WTC11 (cell line): ENCODE measurements at regions of chr7 and their contacts with region 1.

Region 1: DNA sequence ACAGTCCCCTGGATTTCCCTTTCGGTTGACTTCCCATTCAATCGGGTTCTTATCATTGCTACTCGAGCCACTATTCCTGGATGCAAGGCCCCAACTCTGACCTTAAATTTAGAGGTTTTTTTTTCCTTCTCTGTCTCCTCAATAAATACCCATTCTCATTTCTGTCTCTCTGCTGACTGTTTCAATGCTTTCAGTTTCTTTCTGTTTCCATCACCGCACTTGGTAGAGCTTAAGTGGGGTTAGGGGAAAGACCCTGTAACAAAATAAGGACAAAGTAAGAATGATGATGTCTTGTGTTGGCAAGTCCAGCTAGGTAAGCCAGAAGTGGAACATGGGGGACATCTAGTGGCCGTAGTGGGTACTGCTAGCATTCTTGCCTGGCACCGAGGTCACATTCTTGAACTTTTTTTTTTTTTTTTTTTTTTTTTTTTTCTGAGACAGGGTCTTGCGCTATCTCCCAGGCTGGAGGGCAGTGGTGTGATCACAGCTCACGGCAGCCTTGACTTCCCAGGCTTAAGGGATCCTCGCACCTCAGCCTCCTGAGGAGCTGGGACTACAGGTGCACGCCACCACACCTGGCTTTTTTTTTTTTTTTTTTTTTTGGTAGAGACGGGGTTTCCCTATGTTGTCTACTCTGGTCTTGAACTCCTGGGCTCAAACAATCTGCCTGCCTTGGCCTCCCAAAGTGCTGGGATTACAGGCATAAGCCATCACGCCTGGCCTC is 40.3 kb downstream of the ZC3HC1 start:
- DNase-seq: peak; percentile 93
- ATAC-seq: peak; percentile 78
- H3K4me3 Mint-ChIP-seq: no peak overlapping the region
- H3K27ac Mint-ChIP-seq: 0 out of 2 replicates have a peak overlapping the region, but pooled peaks have one; percentile 44
- H3K4me1 Mint-ChIP-seq: peaks cover 3% of the 10 kb centered on the region
- H3K27me3 Mint-ChIP-seq: no peaks in the 10 kb centered on the region
- CTCF ChIP-seq: peak; percentile 95

Region 2: DNA sequence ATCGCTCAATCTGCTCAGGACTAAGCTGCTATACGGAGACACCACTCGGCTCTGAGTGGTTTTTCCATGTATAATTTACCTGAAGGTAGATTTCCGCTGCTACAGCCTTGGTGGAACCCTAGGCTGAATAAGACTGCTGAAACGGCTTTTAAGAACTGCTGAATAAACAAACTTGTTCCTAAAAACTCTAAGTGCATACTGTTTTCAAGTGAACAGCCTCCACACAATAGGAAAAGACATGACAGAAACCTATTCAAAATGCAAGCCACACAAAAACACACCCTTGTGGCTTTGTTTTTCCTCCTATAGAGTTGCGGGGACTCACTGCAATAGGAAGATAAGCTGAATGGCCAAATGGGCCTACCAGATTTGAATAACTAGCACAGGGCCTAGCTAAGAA is 175.3 kb before region 1 on chr7:
- CTCF ChIA-PET with region 1: interaction called, 54 read pairs
- POLR2A ChIA-PET with region 1: interaction called, 8 read pairs
- DNase-seq: no peak
- ATAC-seq: no peak
- H3K4me3 Mint-ChIP-seq: no peak overlapping the region
- H3K27ac Mint-ChIP-seq: peak overlapping the region; percentile 80
- H3K4me1 Mint-ChIP-seq: peaks cover 80% of the 10 kb centered on the region
- H3K27me3 Mint-ChIP-seq: no peaks in the 10 kb centered on the region; the same call in 1 of the 2 replicates
- CTCF ChIP-seq: no peak

Region 3: DNA sequence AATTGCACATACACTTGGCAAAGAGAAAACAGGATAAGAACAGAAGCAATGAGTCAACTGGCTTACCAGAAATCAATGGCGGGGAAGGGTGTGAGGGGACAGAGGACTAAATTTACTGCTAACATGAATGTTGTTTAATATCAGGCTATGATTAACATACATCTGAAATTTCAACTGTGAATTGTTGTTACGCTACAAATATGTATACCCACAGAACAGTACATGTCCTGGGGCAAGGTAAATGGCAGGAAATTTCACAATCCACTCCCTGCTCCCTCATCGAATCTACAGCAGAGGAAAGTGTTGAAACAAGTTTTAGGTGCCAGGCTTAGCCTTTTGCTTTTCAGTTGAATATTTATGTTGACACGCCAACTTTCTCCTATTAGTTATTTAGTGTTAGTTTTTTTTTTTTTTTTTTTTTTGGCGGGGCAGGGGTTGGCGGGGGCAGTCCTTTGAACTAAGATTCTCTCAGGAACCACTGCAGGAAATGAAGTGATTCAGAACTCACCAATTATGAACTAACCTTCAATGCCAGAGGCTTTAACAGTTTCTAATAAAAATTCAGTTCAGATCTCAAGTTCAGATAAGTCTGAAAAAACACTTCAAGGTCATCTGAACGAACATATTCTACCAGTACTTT is 157.1 kb before region 1 on chr7:
- CTCF ChIA-PET with region 1: no interaction called
- POLR2A ChIA-PET with region 1: no interaction called
- DNase-seq: no peak
- ATAC-seq: no peak
- H3K4me3 Mint-ChIP-seq: no peak overlapping the region
- H3K27ac Mint-ChIP-seq: no peak overlapping the region; the same call in 1 of the 2 replicates
- H3K4me1 Mint-ChIP-seq: peaks cover 74% of the 10 kb centered on the region
- H3K27me3 Mint-ChIP-seq: no peaks in the 10 kb centered on the region
- CTCF ChIP-seq: no peak

Region 4: DNA sequence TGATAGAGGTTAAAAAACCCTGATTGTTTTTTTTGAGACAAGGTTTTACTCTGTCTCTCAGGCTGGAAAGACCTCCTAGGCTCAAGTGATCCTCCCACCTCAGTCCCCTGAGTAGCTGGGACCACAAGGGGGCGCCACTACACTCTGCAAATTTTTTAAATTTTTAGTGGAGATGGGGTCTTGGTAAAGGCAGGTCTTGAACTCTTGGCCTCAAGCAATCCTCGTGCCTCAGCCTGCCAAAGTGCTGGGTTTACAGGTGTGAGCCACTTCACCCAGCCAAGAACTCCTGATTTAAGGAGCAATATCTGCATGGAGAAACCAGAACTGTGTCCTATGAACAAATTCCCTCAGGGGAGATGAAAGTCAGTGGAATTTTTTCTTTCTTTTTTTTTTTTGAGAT is 52.2 kb after region 1 on chr7:
- CTCF ChIA-PET with region 1: no interaction called
- POLR2A ChIA-PET with region 1: no interaction called
- DNase-seq: peak; percentile 92
- ATAC-seq: peak; percentile 86
- H3K4me3 Mint-ChIP-seq: no peak overlapping the region
- H3K27ac Mint-ChIP-seq: no peak overlapping the region
- H3K4me1 Mint-ChIP-seq: no peaks in the 10 kb centered on the region
- H3K27me3 Mint-ChIP-seq: no peaks in the 10 kb centered on the region
- CTCF ChIP-seq: peak; percentile 89